Sigmoid colon (tissue), 7 donors: ENCODE measurements at regions of chr16 and their contacts with region 1.

Region 1: GRCh38 chr16:72938795-72939164 is 109.1 kb downstream of the ZFHX3 start:
- DNase-seq: peak; percentile 94
- H3K4me3 ChIP-seq: no peak overlapping the region
- H3K27ac ChIP-seq: peak overlapping the region; percentile 66 to 80 (median 76)
- H3K4me1 ChIP-seq: peaks cover 0 to 54% (median 45%) of the 10 kb centered on the region in 4 donors
- H3K27me3 ChIP-seq: no peaks in the 10 kb centered on the region
- CTCF ChIP-seq: no peak
- EP300 ChIP-seq: no peak
- POLR2A ChIP-seq: no peak

Region 2: DNA sequence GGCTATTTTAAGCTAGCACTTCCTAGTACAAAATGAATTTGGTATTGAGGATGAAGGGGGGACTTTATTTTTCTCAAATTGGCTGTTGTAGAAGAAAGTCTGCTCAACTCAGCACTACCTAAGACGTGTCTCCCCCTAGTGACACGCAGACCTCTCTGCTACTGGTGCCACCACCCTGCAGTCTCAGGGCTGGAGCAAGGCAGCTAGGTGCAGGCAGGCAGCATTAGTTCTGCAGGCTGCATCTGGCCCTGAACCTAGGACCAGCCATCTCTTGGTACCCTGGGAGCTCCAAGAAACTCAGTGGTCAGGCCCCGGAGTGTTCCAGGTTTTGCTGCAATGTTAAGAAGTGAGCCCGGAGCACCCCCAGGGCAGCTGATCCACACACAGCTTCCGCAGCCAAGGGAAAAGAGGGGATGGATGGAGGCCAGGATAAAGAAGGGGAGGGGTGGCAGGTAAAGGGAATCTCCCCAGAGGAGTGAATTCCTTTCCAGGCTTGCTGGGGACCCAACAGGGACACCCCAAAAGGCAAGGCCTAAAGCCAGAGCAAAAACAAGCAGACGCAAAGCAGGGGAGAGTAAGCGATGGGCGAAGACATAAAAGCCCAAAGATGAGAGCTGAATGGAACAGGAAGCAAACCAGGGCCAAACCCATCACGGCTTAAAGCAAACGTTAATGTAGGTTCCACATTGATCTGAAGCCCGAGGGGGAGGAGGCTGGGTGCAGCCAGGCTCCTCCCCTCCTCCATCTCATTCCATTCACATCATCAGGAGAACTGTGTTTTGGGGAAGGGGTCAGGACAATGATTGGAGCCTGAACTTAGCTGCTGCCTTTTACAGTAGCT is 91.4 kb before region 1 on chr16:
- intact Hi-C with region 1: loop called (anchors 5 kb)
- DNase-seq: no peak
- H3K4me3 ChIP-seq: no peak overlapping the region
- H3K27ac ChIP-seq: peak overlapping the region; percentile 56 to 79 (median 68)
- H3K4me1 ChIP-seq: peaks cover 0 to 53% (median 39%) of the 10 kb centered on the region in 4 donors
- H3K27me3 ChIP-seq: no peaks in the 10 kb centered on the region
- CTCF ChIP-seq: peak in 2 of 4 experiments; percentile 4 to 20
- EP300 ChIP-seq: no peak
- POLR2A ChIP-seq: no peak

Region 3: GRCh38 chr16:72989579-72990551 is 51.1 kb after region 1 on chr16:
- intact Hi-C with region 1: loop called (anchors 5 kb)
- DNase-seq: peak; percentile 95
- H3K4me3 ChIP-seq: peak overlapping the region in 3 of 4 donors; percentile 17 to 21 (median 20)
- H3K27ac ChIP-seq: peak overlapping the region; percentile 83 to 91 (median 86)
- H3K4me1 ChIP-seq: peaks cover 0 to 92% (median 85%) of the 10 kb centered on the region in 4 donors
- H3K27me3 ChIP-seq: no peaks in the 10 kb centered on the region
- CTCF ChIP-seq: no peak
- EP300 ChIP-seq: peak; percentile 75 to 87 (median 80)
- POLR2A ChIP-seq: no peak

Region 4: GRCh38 chr16:73047518-73048291 is 108.9 kb after region 1 on chr16 and contains the start of gene ZFHX3:
- intact Hi-C with region 1: loop called (anchors 5 kb)
- DNase-seq: peak; percentile 90
- H3K4me3 ChIP-seq: peak within 1 kb of the TSS; percentile 78 to 90 (median 84)
- H3K27ac ChIP-seq: peak within 1 kb of the TSS; percentile 94 to 99 (median 97)
- H3K4me1 ChIP-seq: peaks cover 3 to 92% (median 88%) of the 10 kb centered on the region in 4 donors
- H3K27me3 ChIP-seq: no peaks in the 10 kb centered on the region
- CTCF ChIP-seq: no peak
- EP300 ChIP-seq: no peak
- POLR2A ChIP-seq: peak in 1 of 2 donors; percentile 20
- total RNA-seq, gene ZFHX3: 17.8 to 38.8 (median 19.1) TPM

Region 5: DNA sequence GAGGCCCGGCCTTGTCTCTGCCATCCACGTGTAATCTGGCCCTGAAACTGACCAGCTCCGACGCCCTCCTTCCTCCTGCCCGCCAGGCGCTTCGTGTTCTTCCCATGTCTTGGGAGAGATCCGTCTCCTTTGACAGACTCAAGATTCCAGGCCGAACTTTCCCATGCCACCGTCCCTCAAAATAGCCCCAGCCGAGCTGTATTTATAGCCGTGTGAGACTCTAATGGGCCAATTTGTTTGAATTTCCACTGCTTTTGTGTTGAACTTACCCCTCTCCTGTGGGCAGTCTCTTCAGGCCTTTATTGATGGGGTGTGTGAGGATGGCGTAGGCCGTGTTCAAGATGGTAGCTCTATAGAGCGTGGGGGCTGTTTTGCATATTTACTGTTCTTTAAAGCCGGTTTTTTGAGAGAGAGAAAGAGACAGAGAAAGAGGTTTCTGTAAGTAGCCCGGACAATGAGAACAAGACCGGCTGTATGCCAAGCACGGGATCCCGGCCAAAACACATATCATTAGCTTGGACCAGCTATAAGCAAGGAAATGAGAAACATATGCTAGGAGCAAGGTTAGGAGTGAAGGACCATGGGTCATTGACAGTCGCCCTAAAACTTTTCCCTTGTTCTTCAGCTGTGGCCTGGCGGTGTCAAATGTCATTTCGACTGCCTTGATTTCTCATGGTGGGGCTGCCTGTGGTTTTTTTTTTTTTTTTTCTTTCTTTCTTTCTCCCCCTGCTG is 233.6 kb after region 1 on chr16:
- intact Hi-C with region 1: loop called (anchors 10 kb)
- DNase-seq: peak; percentile 89
- H3K4me3 ChIP-seq: no peak overlapping the region
- H3K27ac ChIP-seq: peak overlapping the region; percentile 53 to 70 (median 66)
- H3K4me1 ChIP-seq: peaks cover 0 to 22% (median 15%) of the 10 kb centered on the region in 4 donors
- H3K27me3 ChIP-seq: no peaks in the 10 kb centered on the region
- CTCF ChIP-seq: peak in 1 of 4 experiments; percentile 17
- EP300 ChIP-seq: no peak
- POLR2A ChIP-seq: no peak